ENCODE measurements at regions of chr3 and their contacts with region 1.

Region 1: DNA sequence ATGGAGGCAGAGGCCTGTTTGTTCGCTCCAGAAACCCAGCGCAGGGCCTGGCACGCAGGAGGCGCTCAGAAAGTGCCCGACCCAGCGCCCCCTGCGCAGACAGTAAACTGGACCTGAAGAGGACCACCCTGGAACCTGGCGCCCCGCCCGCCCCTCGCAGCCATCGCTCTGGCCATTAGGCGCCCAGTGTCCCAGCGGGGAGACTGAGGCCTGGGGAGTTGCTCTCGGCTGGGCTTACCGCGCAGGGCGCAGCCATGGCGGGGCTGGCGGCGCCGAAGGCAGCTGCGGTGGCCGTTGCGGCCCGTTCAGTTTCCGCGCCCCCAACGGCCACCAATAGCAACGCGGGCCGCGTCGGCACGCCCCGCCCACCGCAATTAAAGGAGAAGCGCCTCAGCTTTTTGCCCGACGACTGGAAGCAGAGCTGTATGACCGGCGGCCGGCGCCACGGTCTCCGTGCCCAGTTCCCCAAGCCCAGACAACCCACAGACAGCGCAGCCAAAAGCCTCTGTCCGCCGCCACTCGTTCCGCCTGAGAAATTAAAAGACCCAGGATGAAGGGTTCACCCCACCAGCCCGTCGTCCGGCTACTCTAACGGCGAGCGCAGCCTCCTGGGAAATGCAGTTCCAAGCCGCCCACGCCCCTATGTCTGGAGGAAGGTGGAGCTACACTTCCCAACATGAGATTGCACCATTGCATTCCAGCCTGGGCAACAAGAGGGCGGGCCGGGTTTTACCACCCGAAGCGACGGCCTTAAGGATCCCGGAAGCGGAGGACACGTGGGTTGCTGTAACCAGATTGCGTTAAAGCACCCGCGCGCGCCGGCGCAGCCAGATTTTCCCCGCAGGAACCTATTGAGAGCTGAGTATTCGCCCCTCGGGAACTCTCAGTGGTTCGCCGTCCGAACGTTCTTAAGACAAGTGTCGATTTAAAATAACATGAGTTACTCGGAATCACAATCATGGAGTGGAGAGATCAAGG is at the start of gene POC1A:
- DNase-seq: peak; percentile 86
- H3K4me3 Mint-ChIP-seq: peak within 1 kb of the TSS; percentile 91
- H3K27ac Mint-ChIP-seq: peak within 1 kb of the TSS; percentile 95
- H3K4me1 Mint-ChIP-seq: peaks cover 25% of the 10 kb centered on the region
- H3K27me3 Mint-ChIP-seq: peaks cover 3% of the 10 kb centered on the region
- total RNA-seq, gene POC1A: 20.3 and 24.9 TPM in 2 replicates

Region 2: GRCh38 chr3:51995346-51996163 is 158.9 kb before region 1 on chr3 and contains the start of gene RPL29:
- intact Hi-C with region 1: loop called (anchors 2 kb)
- DNase-seq: peak; percentile 88
- H3K4me3 Mint-ChIP-seq: peak within 1 kb of the TSS; percentile 98
- H3K27ac Mint-ChIP-seq: peak within 1 kb of the TSS; percentile 100
- H3K4me1 Mint-ChIP-seq: peaks cover 24% of the 10 kb centered on the region
- H3K27me3 Mint-ChIP-seq: peaks cover 5% of the 10 kb centered on the region
- total RNA-seq, gene RPL29: 1,590 and 1,596 TPM in 2 replicates

Region 3: GRCh38 chr3:52144034-52144795 is 10.2 kb before region 1 on chr3:
- intact Hi-C with region 1: loop called (anchors 1 kb)
- DNase-seq: peak; percentile 71
- H3K4me3 Mint-ChIP-seq: no peak overlapping the region
- H3K27ac Mint-ChIP-seq: peak overlapping the region; percentile 18
- H3K4me1 Mint-ChIP-seq: peaks cover 14% of the 10 kb centered on the region
- H3K27me3 Mint-ChIP-seq: no peaks in the 10 kb centered on the region

Region 4: GRCh38 chr3:52197842-52198668 is 43.6 kb after region 1 on chr3 and contains the start of gene ALAS1:
- intact Hi-C with region 1: loop called (anchors 1 kb)
- DNase-seq: peak; percentile 96
- H3K4me3 Mint-ChIP-seq: peak within 1 kb of the TSS; percentile 100
- H3K27ac Mint-ChIP-seq: peak within 1 kb of the TSS; percentile 94
- H3K4me1 Mint-ChIP-seq: peaks cover 63% of the 10 kb centered on the region
- H3K27me3 Mint-ChIP-seq: peaks cover 2% of the 10 kb centered on the region
- total RNA-seq, gene ALAS1: 105 and 110 TPM in 2 replicates

Region 5: DNA sequence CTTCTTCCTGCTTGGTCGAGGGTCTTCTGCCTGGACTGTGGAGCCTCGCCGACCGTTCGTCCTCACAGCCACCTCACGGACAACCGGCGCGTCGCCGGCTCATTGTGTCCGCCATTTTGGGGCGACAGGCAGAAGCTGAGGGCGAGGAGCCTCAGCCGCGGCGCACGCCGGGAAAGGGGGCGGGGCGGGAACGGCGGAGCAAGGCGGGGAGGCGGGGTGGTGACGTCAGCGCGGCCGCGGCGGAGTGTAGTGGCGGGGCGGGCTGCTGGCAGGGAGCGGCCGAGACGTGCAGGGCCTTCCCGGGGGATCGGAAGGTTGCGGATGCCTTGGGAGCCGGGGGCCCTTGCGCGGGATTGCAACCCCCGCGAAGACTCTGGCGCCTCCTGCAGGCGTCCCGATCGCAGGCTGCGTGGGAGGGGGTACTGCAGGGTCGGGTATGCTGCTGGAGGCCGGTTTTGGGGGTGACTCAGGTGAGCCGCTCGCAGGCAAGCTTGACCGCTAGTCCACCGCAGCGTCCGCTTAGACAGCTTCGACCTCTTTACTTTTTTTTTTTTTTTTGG is 124.2 kb after region 1 on chr3 and contains the start of gene WDR82:
- intact Hi-C with region 1: loop called (anchors 2 kb)
- DNase-seq: peak; percentile 95
- H3K4me3 Mint-ChIP-seq: peak within 1 kb of the TSS; percentile 97
- H3K27ac Mint-ChIP-seq: peak within 1 kb of the TSS; percentile 99
- H3K4me1 Mint-ChIP-seq: peaks cover 70% of the 10 kb centered on the region
- H3K27me3 Mint-ChIP-seq: no peaks in the 10 kb centered on the region
- total RNA-seq, gene WDR82: 105 and 107 TPM in 2 replicates

Region 6: GRCh38 chr3:52339612-52340011 is 185.2 kb after region 1 on chr3:
- intact Hi-C with region 1: loop called (anchors 1 kb)
- DNase-seq: peak; percentile 40
- H3K4me3 Mint-ChIP-seq: no peak overlapping the region
- H3K27ac Mint-ChIP-seq: no peak overlapping the region
- H3K4me1 Mint-ChIP-seq: no peaks in the 10 kb centered on the region
- H3K27me3 Mint-ChIP-seq: no peaks in the 10 kb centered on the region

Region 7: GRCh38 chr3:52455283-52456168 is 301.1 kb after region 1 on chr3 and contains the start of gene NISCH:
- intact Hi-C with region 1: loop called (anchors 2 kb)
- DNase-seq: peak; percentile 96
- H3K4me3 Mint-ChIP-seq: peak within 1 kb of the TSS; percentile 96
- H3K27ac Mint-ChIP-seq: peak within 1 kb of the TSS; percentile 93
- H3K4me1 Mint-ChIP-seq: peaks cover 39% of the 10 kb centered on the region
- H3K27me3 Mint-ChIP-seq: no peaks in the 10 kb centered on the region
- total RNA-seq, gene NISCH: 72.0 and 74.2 TPM in 2 replicates

Measured in activated T-helper 1 cell treated with anti-CD3 and anti-CD28 coated beads, Interleukin-12 subunit alpha, Interleukin-12 subunit beta, Interleukin-2, Interleukin-4 antibody, amounts not matched to agents 30 ng/mL and 10 ng/mL and 1 ng/mL, durations not matched to agents 14 hours and 24 hours and 36 hours (primary cell).